Activated CD8-positive, alpha-beta T cell treated with anti-CD3 and anti-CD28 coated beads, Interleukin-2, amount 10 ng/mL, durations not matched to agents 7 days and 5 days (primary cell): ENCODE measurements at regions of chr9 and their contacts with region 1.

Region 1: DNA sequence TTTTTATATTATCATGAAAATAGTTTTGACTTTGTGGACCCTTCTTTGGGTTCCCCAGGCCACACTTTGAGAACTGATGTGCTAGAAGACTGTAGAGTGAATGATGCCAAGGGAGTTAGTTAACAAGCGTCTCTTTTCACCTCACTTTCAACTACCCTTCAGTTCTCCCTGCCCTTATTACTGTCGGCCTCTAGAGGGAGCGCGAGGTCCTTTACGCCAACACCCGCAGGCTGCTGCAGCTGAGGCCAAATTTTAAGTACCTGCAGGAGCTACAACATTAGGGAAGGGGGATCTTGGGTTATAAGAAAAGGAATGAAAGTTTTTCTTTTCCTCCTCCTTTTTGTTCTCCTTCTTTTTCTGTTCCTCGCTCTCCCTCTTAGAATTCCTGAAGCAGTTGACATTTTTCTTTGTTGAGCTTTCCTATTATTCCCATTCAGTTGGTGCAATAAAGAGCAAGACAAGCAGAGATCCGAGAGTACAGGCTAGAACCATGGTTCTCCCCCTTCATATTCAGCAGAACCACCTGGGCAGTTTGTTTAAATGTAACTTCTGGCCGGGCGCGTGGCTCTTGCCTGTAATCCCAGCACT is 84.0 kb downstream of the ZFAND5 start:
- DNase-seq: peak; percentile 80
- ATAC-seq: peak; percentile 90
- H3K4me3 Mint-ChIP-seq: no peak overlapping the region
- H3K27ac Mint-ChIP-seq: no peak overlapping the region
- H3K4me1 Mint-ChIP-seq: no peaks in the 10 kb centered on the region
- H3K27me3 Mint-ChIP-seq: peaks cover 4% of the 10 kb centered on the region

Region 2: DNA sequence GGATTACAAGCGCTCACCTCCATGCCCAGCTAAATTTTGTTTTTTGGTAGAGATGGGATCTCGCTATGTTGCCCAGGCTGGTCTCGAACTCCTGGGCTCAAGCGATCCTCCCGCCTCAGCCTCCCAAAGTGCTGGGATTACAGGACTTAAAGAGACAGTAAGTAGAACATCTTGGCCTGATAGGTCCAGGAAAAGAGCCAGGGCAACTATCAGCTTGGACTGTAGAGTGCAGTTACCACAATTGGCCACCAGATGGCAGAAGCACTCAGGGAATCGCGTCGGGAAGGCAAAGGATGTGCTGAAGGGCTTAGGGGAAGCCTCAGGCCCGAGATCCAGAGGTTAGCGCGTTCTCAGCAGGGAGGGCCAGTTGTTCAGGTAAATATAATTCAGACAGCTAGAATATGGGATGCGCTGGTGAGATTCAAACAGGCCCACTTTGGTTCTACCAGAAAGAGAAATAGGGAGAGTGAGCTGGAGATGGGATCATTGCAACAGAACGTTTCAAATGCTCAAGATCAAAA is 242.1 kb before region 1 on chr9:
- CTCF ChIA-PET with region 1: interaction called, 95 read pairs
- POLR2A ChIA-PET with region 1: no interaction called
- DNase-seq: peak; percentile 72
- ATAC-seq: peak; percentile 76
- H3K4me3 Mint-ChIP-seq: no peak overlapping the region
- H3K27ac Mint-ChIP-seq: no peak overlapping the region
- H3K4me1 Mint-ChIP-seq: peaks cover 2% of the 10 kb centered on the region
- H3K27me3 Mint-ChIP-seq: peaks cover 12% of the 10 kb centered on the region

Region 3: DNA sequence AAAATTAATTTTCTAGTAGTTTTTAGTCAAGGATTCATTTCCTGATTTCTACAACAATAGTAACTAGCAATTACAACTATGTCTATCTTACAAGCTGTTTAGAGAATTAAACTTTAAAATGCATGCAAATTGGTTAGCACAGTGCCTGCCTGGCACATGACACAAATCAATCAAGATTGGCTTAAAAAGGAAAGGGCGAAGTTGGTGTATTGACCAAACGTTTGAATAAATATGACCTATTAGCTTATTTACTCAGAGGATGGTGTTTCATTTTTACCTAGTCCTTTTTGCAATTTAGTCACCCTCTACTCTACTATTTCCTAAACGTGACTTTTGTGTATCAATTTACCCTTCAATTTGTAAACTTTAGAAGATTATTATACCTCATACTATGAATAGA is 48.2 kb before region 1 on chr9:
- CTCF ChIA-PET with region 1: no interaction called
- POLR2A ChIA-PET with region 1: no interaction called
- DNase-seq: no peak
- ATAC-seq: no peak
- H3K4me3 Mint-ChIP-seq: no peak overlapping the region
- H3K27ac Mint-ChIP-seq: no peak overlapping the region
- H3K4me1 Mint-ChIP-seq: no peaks in the 10 kb centered on the region
- H3K27me3 Mint-ChIP-seq: peaks cover 3% of the 10 kb centered on the region

Region 4: DNA sequence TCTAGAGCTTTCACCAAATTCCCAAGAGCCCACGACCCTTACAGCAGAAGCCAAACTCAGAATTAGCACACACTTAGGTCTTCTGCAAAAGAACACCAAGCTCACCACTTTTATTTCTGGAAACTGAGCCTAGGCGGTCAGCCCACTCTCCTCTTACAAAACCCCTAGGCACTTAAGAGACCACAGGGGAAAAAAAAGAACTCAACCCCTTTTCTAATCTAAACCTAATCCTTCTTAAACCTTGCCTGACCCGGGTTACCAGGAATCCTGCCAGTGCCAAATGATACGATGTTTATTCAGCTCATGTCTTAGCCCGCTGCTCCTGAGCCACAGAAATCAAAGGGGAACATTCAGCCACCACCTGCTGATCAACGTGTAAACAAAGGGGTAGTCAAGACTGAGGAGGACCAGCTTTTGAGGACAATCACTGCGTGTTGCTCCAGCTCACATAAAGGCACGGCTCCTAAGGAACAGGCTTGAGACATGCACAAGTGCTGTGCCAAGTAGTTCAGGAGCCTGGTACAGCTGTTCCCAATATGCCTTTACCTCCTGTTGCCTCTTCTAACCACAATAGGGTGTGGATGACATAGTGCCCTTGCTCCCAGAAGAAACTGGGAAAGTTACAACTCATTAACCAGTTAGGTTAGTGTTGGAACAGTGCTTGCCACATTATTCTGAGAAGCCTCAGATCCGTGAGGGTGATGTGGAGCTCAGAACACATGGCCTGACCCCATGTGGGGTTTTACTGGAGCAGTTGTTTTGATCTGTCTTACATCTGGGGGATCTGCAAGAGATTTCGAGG is 34.7 kb after region 1 on chr9:
- CTCF ChIA-PET with region 1: no interaction called
- POLR2A ChIA-PET with region 1: no interaction called
- DNase-seq: no peak
- ATAC-seq: no peak
- H3K4me3 Mint-ChIP-seq: no peak overlapping the region
- H3K27ac Mint-ChIP-seq: no peak overlapping the region
- H3K4me1 Mint-ChIP-seq: no peaks in the 10 kb centered on the region
- H3K27me3 Mint-ChIP-seq: peaks cover 5% of the 10 kb centered on the region

Region 5: GRCh38 chr9:72592502-72593403 is 311.7 kb after region 1 on chr9:
- CTCF ChIA-PET with region 1: interaction called, 85 read pairs
- POLR2A ChIA-PET with region 1: no interaction called
- DNase-seq: peak; percentile 55
- ATAC-seq: peak; percentile 75
- H3K4me3 Mint-ChIP-seq: no peak overlapping the region
- H3K27ac Mint-ChIP-seq: no peak overlapping the region
- H3K4me1 Mint-ChIP-seq: peaks cover 31% of the 10 kb centered on the region
- H3K27me3 Mint-ChIP-seq: no peaks in the 10 kb centered on the region

Region 6: DNA sequence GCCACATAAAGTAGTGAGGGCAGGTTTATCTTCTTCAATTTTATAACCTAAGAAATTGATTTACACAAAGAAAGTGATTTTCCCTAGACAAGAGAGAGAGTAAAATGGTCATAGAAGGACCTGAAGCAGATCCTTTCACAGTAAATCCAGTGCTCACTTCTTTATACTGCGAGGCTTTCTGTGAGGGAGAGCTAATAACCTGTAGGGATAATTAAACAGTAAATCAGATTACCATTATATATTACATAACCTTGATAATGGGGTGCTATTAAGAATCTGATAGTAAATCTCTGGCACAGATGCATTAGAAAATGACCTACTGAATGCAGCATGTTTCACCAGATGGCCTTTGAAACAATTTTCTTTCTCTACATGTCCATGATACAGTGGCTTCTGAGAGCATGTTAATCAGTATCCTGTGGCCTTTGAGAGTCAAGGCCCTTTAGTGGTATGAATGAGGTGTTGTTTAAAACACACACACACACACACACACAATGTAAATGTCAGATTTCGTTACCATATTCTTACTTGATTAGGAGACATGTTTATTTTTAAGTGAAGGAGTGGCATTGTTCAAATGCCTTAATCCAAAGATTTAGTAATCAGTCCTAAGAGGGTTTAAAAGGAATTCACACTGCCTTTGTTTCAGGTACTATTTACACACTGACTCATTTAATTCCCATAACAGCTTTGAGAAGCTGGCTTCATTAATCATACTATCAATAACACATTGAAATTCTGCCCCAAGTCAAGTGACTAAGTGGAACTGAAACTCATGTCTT is 547.1 kb after region 1 on chr9:
- CTCF ChIA-PET with region 1: interaction called, 18 read pairs
- POLR2A ChIA-PET with region 1: no interaction called
- DNase-seq: no peak
- ATAC-seq: no peak
- H3K4me3 Mint-ChIP-seq: no peak overlapping the region
- H3K27ac Mint-ChIP-seq: no peak overlapping the region
- H3K4me1 Mint-ChIP-seq: no peaks in the 10 kb centered on the region
- H3K27me3 Mint-ChIP-seq: no peaks in the 10 kb centered on the region

Region 7: GRCh38 chr9:73023025-73023541 is 742.1 kb after region 1 on chr9:
- CTCF ChIA-PET with region 1: interaction called, 12 read pairs
- POLR2A ChIA-PET with region 1: no interaction called
- DNase-seq: peak; percentile 62
- ATAC-seq: peak; percentile 39
- H3K4me3 Mint-ChIP-seq: no peak overlapping the region
- H3K27ac Mint-ChIP-seq: no peak overlapping the region
- H3K4me1 Mint-ChIP-seq: peaks cover 9% of the 10 kb centered on the region
- H3K27me3 Mint-ChIP-seq: peaks cover 10% of the 10 kb centered on the region